Panc1 (cell line): ENCODE measurements at regions of chr6 and their contacts with region 1.

Region 1: GRCh38 chr6:41836022-41836659 is 48.6 kb downstream of the TOMM6 start:
- DNase-seq: no peak
- ATAC-seq: no peak
- H3K4me3 ChIP-seq: no peak overlapping the region
- H3K27ac ChIP-seq: no peak overlapping the region
- H3K4me1 ChIP-seq: no peaks in the 10 kb centered on the region
- H3K27me3 ChIP-seq: no peaks in the 10 kb centered on the region
- CTCF ChIP-seq: no peak

Region 2: GRCh38 chr6:41878246-41878645 is 42.1 kb after region 1 on chr6:
- CTCF ChIA-PET with region 1: interaction called, 10 read pairs
- POLR2A ChIA-PET with region 1: no interaction called
- in situ Hi-C with region 1: no loop called
- intact Hi-C with region 1: no loop called
- DNase-seq: no peak
- ATAC-seq: 0 out of 2 replicates have a peak, but pooled peaks have one; percentile 42
- H3K4me3 ChIP-seq: no peak overlapping the region
- H3K27ac ChIP-seq: no peak overlapping the region
- H3K4me1 ChIP-seq: peaks cover 3% of the 10 kb centered on the region; the same call in 1 of the 2 replicates
- H3K27me3 ChIP-seq: no peaks in the 10 kb centered on the region
- CTCF ChIP-seq: no peak